ENCODE measurements at regions of chr4 and their contacts with region 1.

Region 1: DNA sequence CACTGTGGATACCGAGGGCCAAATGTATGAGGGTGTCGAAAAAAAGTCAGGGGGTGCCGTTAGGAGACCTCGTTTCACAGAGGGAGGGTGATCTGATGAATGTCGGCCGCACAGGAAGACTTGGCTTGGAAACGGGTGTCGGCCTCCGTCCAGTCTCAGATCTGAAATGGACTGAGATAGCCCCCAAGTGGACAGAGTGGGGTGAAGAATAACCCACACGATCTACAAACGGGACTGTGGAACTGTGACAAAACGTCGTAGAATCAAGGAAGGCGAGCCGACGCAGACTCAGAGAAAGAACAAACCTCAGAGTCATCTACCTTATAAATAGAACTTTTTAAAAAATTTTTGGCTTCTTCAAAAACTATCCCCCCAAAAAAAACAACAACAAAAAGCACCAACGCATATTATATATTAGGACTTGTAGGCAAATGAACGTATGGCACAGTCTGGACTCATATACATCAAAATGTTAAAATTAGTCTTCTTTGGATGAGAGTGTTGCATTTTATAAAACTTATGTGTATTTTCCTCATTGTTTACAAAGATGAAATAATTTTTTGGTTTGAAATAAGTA is 63.8 kb upstream of the IRF2 start:
- DNase-seq: peak; percentile 70
- H3K4me3 Mint-ChIP-seq: peak overlapping the region; percentile 88
- H3K27ac Mint-ChIP-seq: peak overlapping the region; percentile 94
- H3K4me1 Mint-ChIP-seq: peaks cover 10% of the 10 kb centered on the region
- H3K27me3 Mint-ChIP-seq: no peaks in the 10 kb centered on the region
- CTCF ChIP-seq: peak; percentile 23

Region 2: DNA sequence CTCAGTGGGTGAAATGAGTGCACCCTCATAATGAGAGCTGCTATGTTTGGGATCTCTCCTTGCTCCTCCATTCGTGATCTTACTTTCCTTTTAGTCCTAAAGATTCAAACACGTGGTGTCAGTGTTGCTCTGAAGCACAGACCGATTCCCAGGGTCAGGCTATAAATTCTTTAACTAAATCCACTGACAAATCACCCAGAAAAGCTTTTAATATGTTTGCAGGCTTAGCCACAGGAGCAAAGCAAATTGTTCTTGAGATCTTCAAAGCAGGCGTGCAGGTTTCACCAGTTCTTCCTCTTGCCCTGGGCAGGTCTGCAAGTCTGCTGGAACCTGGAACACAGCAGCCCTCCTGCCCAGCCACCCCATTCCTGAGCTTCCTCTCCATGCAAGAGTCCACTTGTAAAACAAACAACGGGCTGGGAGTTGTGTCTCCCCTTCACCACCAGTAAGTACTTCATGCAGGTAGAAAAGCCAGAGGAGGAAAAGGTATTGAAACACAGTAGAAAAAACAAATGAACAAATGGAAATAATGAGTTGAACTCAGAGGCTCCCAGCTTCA is 250.3 kb before region 1 on chr4:
- CTCF ChIA-PET with region 1: interaction called, 5 read pairs
- intact Hi-C with region 1: loop called (anchors 1 kb)
- DNase-seq: peak; percentile 66
- H3K4me3 Mint-ChIP-seq: peak overlapping the region; percentile 62
- H3K27ac Mint-ChIP-seq: peak overlapping the region; percentile 87
- H3K4me1 Mint-ChIP-seq: peaks cover 22% of the 10 kb centered on the region
- H3K27me3 Mint-ChIP-seq: no peaks in the 10 kb centered on the region
- CTCF ChIP-seq: no peak